ENCODE measurements at regions of chr17 and their contacts with region 1.

Region 1: DNA sequence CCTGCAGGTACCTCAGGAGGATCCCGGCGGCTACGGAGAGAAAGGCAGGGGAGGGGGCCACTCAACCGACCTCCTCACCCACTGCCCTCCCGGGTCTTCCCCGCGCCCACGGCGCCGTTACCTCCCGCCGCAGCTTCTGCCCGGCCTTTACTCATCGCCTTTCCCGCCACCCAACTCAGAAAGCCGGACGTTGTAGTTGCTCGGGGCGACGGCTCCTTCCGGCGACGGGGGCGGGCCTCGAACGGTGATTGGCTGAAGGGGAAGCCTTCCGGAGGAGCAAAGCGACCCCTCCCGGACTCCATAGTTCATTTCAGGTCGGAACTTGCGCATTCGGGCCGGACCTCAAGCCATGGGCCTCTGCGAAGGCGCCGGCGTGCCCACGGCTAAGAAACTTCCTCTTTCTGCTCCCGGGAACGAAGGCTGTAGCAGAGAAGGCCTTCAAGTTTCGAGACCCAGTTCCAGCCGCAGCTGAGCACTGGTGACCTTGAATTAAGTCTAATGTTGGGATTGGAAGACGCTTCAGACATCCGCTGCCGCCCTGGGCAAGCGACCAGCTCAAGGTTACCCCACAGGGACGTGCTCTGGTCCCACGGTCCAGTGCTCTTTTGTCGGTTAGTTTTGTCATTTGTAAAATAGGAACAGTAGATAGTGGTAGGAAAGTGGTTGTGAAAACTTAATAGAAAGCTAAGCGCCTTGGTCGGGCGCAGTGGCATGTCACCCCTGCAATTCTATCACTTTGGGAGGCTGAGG is at the start of gene PSMC3IP:
- DNase-seq: peak; percentile 95
- H3K4me3 ChIP-seq: peak within 1 kb of the TSS; percentile 84
- H3K27ac ChIP-seq: peak within 1 kb of the TSS; percentile 93
- H3K4me1 ChIP-seq: peaks cover 48% of the 10 kb centered on the region
- CTCF ChIP-seq: peak; percentile 60; the same call in 1 of the 2 replicates
- total RNA-seq, gene PSMC3IP: 27.3 and 40.5 TPM in 2 replicates

Region 2: GRCh38 chr17:42527273-42527703 is 50.4 kb before region 1 on chr17:
- CTCF ChIA-PET with region 1: no interaction called
- POLR2A ChIA-PET with region 1: no interaction called
- intact Hi-C with region 1: no loop called
- DNase-seq: peak; percentile 87
- H3K4me3 ChIP-seq: no peak overlapping the region
- H3K27ac ChIP-seq: no peak overlapping the region
- H3K4me1 ChIP-seq: peaks cover 19% of the 10 kb centered on the region
- CTCF ChIP-seq: peak; percentile 89

Region 3: GRCh38 chr17:42609182-42609813 is 31.6 kb after region 1 on chr17 and contains the starts of genes RETREG3 and TUBG1:
- CTCF ChIA-PET with region 1: interaction called, 19 read pairs
- POLR2A ChIA-PET with region 1: interaction called, 12 read pairs
- intact Hi-C with region 1: loop called (anchors 1 kb)
- DNase-seq: peak; percentile 99
- H3K4me3 ChIP-seq: peak within 1 kb of the TSS; percentile 88
- H3K27ac ChIP-seq: peak within 1 kb of the TSS; percentile 74
- H3K4me1 ChIP-seq: peaks cover 31% of the 10 kb centered on the region
- CTCF ChIP-seq: no peak
- total RNA-seq, gene RETREG3: 33.5 and 34.1 TPM in 2 replicates
- total RNA-seq, gene TUBG1: 93.7 and 113 TPM in 2 replicates

Region 4: GRCh38 chr17:42677921-42678781 is 100.4 kb after region 1 on chr17:
- CTCF ChIA-PET with region 1: interaction called, 9 read pairs
- POLR2A ChIA-PET with region 1: interaction called, 9 read pairs
- intact Hi-C with region 1: loop called (anchors 1 kb)
- DNase-seq: peak; percentile 90
- H3K4me3 ChIP-seq: peak overlapping the region; percentile 74
- H3K27ac ChIP-seq: peak overlapping the region; percentile 68
- H3K4me1 ChIP-seq: peaks cover 70% of the 10 kb centered on the region
- CTCF ChIP-seq: no peak

Region 5: GRCh38 chr17:42760652-42761581 is 183.2 kb after region 1 on chr17 and contains the start of gene RAMP2:
- CTCF ChIA-PET with region 1: interaction called, 11 read pairs
- POLR2A ChIA-PET with region 1: interaction called, 3 read pairs
- intact Hi-C with region 1: loop called (anchors 1 kb)
- DNase-seq: no peak
- H3K4me3 ChIP-seq: no peak within 1 kb of the TSS
- H3K27ac ChIP-seq: no peak within 1 kb of the TSS
- H3K4me1 ChIP-seq: peaks cover 9% of the 10 kb centered on the region
- CTCF ChIP-seq: no peak
- total RNA-seq, gene RAMP2: not detected in 2 replicates

Measured in OCI-LY7 (cell line).